ENCODE measurements at regions of chr5 and their contacts with region 1.

Region 1: GRCh38 chr5:135565725-135566421 is 12.9 kb downstream of the CXCL14 start:
- DNase-seq: peak; percentile 78 to 82 (median 80)
- ATAC-seq: peak; percentile 92
- H3K4me3 ChIP-seq: no peak overlapping the region
- H3K27ac ChIP-seq: no peak overlapping the region
- H3K4me1 ChIP-seq: peaks cover 7 to 10% of the 10 kb centered on the region in 2 experiments
- H3K27me3 ChIP-seq: peaks cover 0 to 4% of the 10 kb centered on the region in 2 experiments; a peak in 2 of 5 replicates
- CTCF ChIP-seq: peak; percentile 91 to 95 (median 92)
- EP300 ChIP-seq: no peak
- POLR2A ChIP-seq: no peak
- RAD21 ChIP-seq: peak; percentile 53 to 66

Region 2: DNA sequence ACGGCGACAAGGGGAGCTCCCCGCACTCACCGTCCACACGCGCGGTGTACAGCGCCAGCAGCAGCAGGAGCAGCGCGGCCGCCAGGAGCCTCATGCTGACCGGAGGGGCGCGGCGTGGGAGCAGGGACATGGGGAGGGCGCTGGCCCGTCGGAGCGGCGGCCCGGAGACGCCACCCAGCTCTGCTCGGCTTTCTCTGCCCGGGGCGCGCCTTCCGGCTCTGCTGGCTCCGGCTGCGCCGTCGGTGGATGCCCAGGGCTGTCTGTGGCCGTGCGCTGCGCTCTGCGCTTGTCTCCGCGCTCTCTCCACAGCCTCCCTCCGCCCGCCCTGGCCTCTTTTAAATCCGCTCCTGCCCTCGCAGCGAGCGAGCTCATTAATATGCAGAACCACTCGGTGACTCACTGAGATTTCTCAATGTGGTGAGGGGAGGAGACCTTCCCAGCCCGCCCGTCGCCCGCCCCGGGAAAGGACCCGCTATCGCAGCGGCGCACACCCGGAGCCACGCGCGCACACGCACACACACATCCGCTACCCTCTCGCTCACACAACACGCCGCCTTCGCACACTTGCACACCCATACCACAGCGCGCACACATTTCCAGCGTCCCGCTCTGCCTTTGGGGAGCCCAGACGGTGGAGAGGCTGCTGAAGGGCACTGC is 12.9 kb after region 1 on chr5 and contains the start of gene CXCL14:
- CTCF ChIA-PET with region 1: no interaction called
- POLR2A ChIA-PET with region 1: interaction called, 10 read pairs
- in situ Hi-C with region 1: no loop called
- intact Hi-C with region 1: no loop called
- DNase-seq: no peak
- ATAC-seq: no peak
- H3K4me3 ChIP-seq: no peak within 1 kb of the TSS
- H3K27ac ChIP-seq: no peak within 1 kb of the TSS
- H3K4me1 ChIP-seq: peaks cover 0 to 11% of the 10 kb centered on the region in 2 experiments; a peak in 1 of 5 replicates
- H3K27me3 ChIP-seq: peaks cover 2 to 72% of the 10 kb centered on the region in 2 experiments; a peak in 4 of 5 replicates
- CTCF ChIP-seq: no peak
- EP300 ChIP-seq: no peak
- POLR2A ChIP-seq: no peak
- RAD21 ChIP-seq: no peak
- polyA plus RNA-seq, gene CXCL14: not detected

Region 3: GRCh38 chr5:135729321-135729786 is 163.5 kb after region 1 on chr5:
- CTCF ChIA-PET with region 1: no interaction called
- POLR2A ChIA-PET with region 1: no interaction called
- in situ Hi-C with region 1: no loop called
- intact Hi-C with region 1: loop called (anchors 5 kb)
- DNase-seq: no peak
- ATAC-seq: no peak
- H3K4me3 ChIP-seq: no peak overlapping the region
- H3K27ac ChIP-seq: no peak overlapping the region
- H3K4me1 ChIP-seq: no peaks in the 10 kb centered on the region
- H3K27me3 ChIP-seq: peaks cover 0 to 4% of the 10 kb centered on the region in 2 experiments; a peak in 1 of 5 replicates
- CTCF ChIP-seq: peak in 2 of 3 experiments; percentile 15 to 48; a peak in 2 of 6 replicates
- EP300 ChIP-seq: no peak
- POLR2A ChIP-seq: no peak
- RAD21 ChIP-seq: peak in 1 of 2 experiments; percentile 64; a peak in 2 of 4 replicates

Region 4: DNA sequence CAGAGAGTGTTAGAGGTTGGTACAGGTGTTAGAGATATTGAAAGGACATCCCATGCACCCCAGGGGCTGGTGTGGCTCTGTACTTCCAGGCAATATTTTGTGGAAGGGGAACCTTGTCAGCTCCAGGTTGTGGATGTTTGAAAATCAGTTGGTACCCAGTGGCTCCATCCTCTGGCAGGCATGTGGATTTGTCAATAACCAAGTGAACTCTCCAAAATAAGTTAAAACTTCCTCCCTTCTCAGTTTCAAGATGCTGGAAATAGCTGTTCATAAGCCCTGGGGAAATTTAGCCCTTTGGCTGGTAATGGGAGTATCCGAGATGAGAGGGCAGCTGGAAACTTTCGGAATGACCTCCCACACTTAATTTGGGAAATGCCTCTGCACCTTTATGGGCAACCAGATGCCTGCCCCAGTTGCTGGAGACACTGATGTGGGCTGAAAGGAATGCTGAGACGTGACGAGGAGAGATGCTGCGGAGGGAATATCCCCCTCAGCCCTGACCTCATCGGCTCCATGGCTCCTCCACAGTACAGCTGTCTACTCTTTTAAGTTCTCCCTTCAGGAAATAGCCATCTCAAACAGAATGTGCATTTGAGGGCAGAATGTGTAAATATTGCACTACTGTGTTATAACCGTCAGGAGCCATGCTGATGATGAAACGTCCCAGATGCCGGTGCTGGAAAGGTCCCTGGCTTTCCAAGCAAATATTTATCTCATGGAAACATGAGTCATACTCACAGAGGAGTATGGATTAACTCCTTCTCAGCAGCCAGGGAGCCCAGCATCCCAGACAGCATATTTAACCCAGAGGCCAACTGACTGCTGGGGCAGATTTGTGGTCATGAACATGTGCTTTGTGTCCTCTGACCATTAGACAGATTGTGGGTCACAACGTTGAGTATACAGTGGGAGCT is 492.4 kb after region 1 on chr5:
- CTCF ChIA-PET with region 1: no interaction called
- POLR2A ChIA-PET with region 1: no interaction called
- in situ Hi-C with region 1: no loop called
- intact Hi-C with region 1: no loop called
- DNase-seq: no peak
- ATAC-seq: no peak
- H3K4me3 ChIP-seq: no peak overlapping the region
- H3K27ac ChIP-seq: no peak overlapping the region
- H3K4me1 ChIP-seq: peaks cover 0 to 1% of the 10 kb centered on the region in 2 experiments; a peak in 3 of 5 replicates
- H3K27me3 ChIP-seq: peaks cover 14 to 58% of the 10 kb centered on the region in 2 experiments; a peak in 4 of 5 replicates
- CTCF ChIP-seq: peak in 2 of 3 experiments; percentile 11 to 30; a peak in 2 of 6 replicates
- EP300 ChIP-seq: no peak
- POLR2A ChIP-seq: no peak
- RAD21 ChIP-seq: peak in 1 of 2 experiments; percentile 35; a peak in 2 of 4 replicates

Region 5: DNA sequence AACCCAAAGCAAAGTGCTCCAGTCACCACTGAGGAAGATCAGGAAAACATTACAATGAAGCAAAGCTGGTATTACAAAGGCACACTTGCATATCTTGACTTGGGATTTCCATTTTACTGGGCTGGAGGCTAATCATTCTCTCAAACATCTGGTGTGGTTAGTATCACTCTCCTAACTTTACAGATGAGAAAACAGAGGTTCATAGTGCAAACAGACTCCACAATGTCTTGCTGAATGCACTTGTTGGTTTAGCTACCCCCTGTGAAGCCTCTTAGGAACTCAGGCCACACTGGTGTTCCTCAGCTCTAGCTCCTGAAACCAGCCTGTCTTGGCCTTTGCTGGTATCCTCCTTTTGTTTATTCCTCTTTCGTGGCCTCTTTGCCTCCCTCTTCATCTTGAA is 537.2 kb after region 1 on chr5:
- CTCF ChIA-PET with region 1: no interaction called
- POLR2A ChIA-PET with region 1: no interaction called
- in situ Hi-C with region 1: no loop called
- intact Hi-C with region 1: no loop called
- DNase-seq: no peak
- ATAC-seq: no peak
- H3K4me3 ChIP-seq: no peak overlapping the region
- H3K27ac ChIP-seq: no peak overlapping the region
- H3K4me1 ChIP-seq: no peaks in the 10 kb centered on the region; a peak in 1 of 5 replicates
- H3K27me3 ChIP-seq: peaks cover 10% of the 10 kb centered on the region in 2 experiments; a peak in 3 of 5 replicates
- CTCF ChIP-seq: no peak
- EP300 ChIP-seq: no peak
- POLR2A ChIP-seq: no peak
- RAD21 ChIP-seq: no peak